ENCODE measurements at regions of chr10 and their contacts with region 1.

Region 1: DNA sequence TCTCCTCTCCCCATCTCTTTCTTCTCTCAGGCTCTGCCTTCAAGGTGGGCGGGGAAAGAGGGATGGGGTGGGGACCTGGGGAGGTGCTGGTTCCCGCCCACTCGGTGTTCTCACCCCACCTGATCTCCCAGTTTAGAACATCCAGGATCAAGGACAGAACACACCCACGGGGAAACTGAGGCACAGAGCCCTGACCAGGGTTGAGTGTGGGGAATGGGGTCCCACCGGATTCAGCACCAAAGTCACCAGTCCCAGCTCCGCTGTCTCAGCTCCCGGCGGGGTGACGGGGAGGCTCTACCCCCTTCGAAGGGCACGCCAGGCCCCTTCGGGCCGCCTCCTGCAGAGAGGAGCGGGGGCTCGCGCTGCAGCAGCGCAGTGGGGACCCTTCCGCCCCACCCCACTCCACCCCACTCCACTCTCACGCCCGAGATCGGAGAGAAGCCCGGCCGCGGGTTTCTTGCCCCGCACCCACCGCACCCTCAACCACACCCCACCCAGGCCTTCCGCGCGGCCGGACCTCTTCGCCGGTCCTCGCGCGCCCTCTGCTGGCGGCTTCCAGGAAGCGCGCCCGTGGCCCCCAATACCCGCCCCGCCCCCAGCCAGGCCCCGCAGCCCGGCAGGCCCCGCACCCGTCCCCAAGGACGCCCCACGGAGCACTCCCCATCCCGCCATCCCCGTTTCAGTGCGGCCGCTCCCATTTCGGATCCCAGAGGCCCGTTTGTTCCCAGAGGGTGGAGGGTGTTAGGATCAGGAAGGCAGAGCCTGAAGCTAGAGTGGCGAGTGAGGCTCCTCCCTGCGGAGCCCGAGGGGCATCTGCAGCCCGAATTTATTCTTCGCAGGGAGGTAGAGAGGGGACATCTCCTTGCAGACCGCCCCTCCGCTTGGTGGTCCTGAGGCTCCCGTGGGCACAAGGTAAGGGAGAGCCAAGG is 18.0 kb downstream of the POLL start:
- DNase-seq: peak; percentile 20
- ATAC-seq: peak; percentile 78
- H3K4me3 ChIP-seq: peak overlapping the region; percentile 68 to 85 (median 68)
- H3K27ac ChIP-seq: no peak overlapping the region
- H3K4me1 ChIP-seq: peaks cover 46% of the 10 kb centered on the region
- H3K27me3 ChIP-seq: peaks cover 0 to 47% of the 10 kb centered on the region in 2 experiments; a peak in 4 of 5 replicates
- CTCF ChIP-seq: peak; percentile 88
- EP300 ChIP-seq: no peak
- POLR2A ChIP-seq: no peak
- RAD21 ChIP-seq: peak; percentile 88

Region 2: DNA sequence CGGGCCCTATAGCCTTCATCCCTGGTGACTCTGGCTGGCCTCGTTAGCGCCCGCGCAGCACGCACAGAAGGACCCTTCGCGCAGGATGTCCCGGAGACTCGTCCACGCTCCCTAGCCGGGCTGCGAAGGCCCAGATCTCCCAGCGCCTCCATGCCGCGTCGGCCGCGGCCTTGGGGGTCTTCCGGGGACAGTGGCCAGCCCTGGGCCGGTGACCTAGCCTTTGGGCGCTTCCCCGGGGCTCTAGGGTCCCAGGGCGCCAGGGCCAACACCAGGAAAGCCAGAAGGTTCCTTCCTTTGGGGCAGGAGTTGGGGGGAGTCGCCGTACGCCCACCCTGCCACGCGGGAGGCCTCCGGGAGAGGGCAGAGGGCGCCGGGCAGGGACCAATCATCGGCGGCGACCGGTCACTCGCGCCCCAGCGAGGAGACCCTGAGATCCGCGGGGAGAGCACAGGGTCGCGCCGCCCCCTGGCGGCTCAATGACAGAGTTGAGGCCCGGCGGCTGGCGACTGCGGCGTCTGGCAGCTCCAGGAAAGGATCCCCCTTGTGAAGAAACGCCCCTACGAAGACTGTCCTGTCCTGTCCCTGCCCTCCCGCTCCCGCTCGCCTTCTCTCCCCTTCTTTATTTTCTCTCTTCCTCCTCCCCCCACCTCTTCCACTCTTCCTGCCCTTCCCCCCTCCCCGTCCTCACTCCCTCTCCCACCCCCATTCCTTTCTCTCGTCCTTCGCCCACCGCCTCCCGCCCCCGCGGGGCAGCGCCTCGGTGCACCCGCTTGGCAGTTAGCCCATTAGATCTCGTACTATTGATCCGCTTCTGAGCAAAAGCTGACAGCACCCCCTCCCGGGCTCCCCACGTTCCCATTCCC is 278.5 kb before region 1 on chr10:
- CTCF ChIA-PET with region 1: no interaction called
- POLR2A ChIA-PET with region 1: no interaction called
- in situ Hi-C with region 1: loop called (anchors 5 kb)
- intact Hi-C with region 1: loop called (anchors 5 kb)
- DNase-seq: peak; percentile 30
- ATAC-seq: peak; percentile 87
- H3K4me3 ChIP-seq: peak overlapping the region; percentile 51 to 73 (median 57)
- H3K27ac ChIP-seq: no peak overlapping the region
- H3K4me1 ChIP-seq: peaks cover 24% of the 10 kb centered on the region
- H3K27me3 ChIP-seq: peaks cover 5 to 75% of the 10 kb centered on the region in 2 experiments
- CTCF ChIP-seq: peak; percentile 83
- EP300 ChIP-seq: no peak
- POLR2A ChIP-seq: no peak
- RAD21 ChIP-seq: peak; percentile 77

Region 3: GRCh38 chr10:101495324-101495925 is 74.7 kb before region 1 on chr10:
- CTCF ChIA-PET with region 1: no interaction called
- POLR2A ChIA-PET with region 1: no interaction called
- in situ Hi-C with region 1: no loop called
- intact Hi-C with region 1: loop called (anchors 2 kb)
- DNase-seq: peak; percentile 36
- ATAC-seq: peak; percentile 89
- H3K4me3 ChIP-seq: no peak overlapping the region
- H3K27ac ChIP-seq: peak overlapping the region; percentile 22
- H3K4me1 ChIP-seq: peaks cover 48% of the 10 kb centered on the region
- H3K27me3 ChIP-seq: no peaks in the 10 kb centered on the region
- CTCF ChIP-seq: peak; percentile 70
- EP300 ChIP-seq: no peak
- POLR2A ChIP-seq: no peak
- RAD21 ChIP-seq: no peak

Region 4: GRCh38 chr10:101536800-101537199 is 33.3 kb before region 1 on chr10:
- CTCF ChIA-PET with region 1: no interaction called
- POLR2A ChIA-PET with region 1: no interaction called
- in situ Hi-C with region 1: no loop called
- intact Hi-C with region 1: loop called (anchors 1 kb)
- DNase-seq: peak; percentile 23
- ATAC-seq: no peak
- H3K4me3 ChIP-seq: no peak overlapping the region
- H3K27ac ChIP-seq: no peak overlapping the region
- H3K4me1 ChIP-seq: no peaks in the 10 kb centered on the region
- H3K27me3 ChIP-seq: no peaks in the 10 kb centered on the region
- CTCF ChIP-seq: peak; percentile 53
- EP300 ChIP-seq: no peak
- POLR2A ChIP-seq: no peak
- RAD21 ChIP-seq: no peak

Region 5: DNA sequence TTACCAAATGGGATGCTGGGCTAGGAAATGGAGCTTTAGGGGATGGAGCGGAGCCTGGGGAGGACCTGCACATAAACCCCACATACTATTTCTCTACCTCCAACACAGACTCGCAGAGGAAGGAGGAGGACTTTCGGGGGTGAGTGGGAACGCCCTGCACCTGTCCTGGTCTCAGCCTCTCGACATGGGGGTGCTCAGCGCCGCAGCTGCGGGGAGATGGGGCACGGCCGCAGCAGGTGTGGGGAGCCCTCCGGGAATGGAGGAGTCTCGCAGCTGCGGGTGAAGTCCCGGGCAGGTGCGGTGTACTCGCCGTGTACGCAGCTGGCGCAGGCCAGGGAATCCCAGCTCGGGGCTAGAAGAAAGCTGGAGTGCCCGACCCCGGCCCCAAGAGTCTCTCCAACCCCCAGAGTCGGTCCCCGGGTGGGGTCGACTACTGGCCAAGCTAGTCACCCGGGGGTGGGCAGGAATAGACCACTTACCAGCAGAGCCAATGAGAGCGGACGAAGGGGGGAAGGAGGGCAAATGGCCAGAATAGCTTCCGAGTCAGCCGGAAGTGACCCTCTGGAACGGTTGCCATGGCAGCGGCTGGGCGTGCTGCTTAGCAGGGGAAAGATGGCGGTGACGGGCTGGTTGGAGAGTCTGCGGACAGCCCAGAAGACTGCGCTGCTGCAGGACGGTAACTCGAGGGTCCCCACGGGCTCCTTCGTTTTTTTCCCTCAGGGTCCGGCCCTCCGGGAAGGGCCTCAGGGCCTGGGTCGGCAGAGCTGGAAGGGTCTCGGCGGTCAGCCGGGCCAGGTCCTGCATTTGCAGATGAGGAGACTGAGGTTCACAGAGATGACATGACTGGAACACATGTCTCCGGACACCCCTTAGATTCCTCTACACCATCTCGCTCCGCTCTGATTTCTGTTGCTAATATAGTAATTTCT is 17.9 kb after region 1 on chr10 and contains the starts of genes DPCD and POLL:
- CTCF ChIA-PET with region 1: no interaction called
- POLR2A ChIA-PET with region 1: interaction called, 10 read pairs
- in situ Hi-C with region 1: no loop called
- intact Hi-C with region 1: no loop called
- DNase-seq: peak; percentile 93
- ATAC-seq: peak; percentile 98
- H3K4me3 ChIP-seq: peak within 1 kb of the TSS; percentile 86 to 95 (median 94)
- H3K27ac ChIP-seq: peak within 1 kb of the TSS; percentile 60
- H3K4me1 ChIP-seq: peaks cover 25% of the 10 kb centered on the region
- H3K27me3 ChIP-seq: no peaks in the 10 kb centered on the region; a peak in 1 of 5 replicates
- CTCF ChIP-seq: no peak
- EP300 ChIP-seq: no peak
- POLR2A ChIP-seq: peak; percentile 30 to 72; a peak in 3 of 4 replicates
- RAD21 ChIP-seq: no peak
- total RNA-seq, gene DPCD: 25.2 and 32.8 TPM in 2 replicates
- total RNA-seq, gene POLL: 8.1 and 13.8 TPM in 2 replicates

Region 6: GRCh38 chr10:101710059-101710695 is 140.1 kb after region 1 on chr10:
- CTCF ChIA-PET with region 1: no interaction called
- POLR2A ChIA-PET with region 1: no interaction called
- in situ Hi-C with region 1: no loop called
- intact Hi-C with region 1: no loop called
- DNase-seq: no peak
- ATAC-seq: peak; percentile 68
- H3K4me3 ChIP-seq: no peak overlapping the region
- H3K27ac ChIP-seq: no peak overlapping the region
- H3K4me1 ChIP-seq: no peaks in the 10 kb centered on the region
- H3K27me3 ChIP-seq: peaks cover 2 to 3% of the 10 kb centered on the region in 2 experiments; a peak in 3 of 5 replicates
- CTCF ChIP-seq: no peak
- EP300 ChIP-seq: no peak
- POLR2A ChIP-seq: no peak
- RAD21 ChIP-seq: no peak

Measured in HepG2 (cell line).